ENCODE measurements at regions of chr10 and their contacts with region 1.

Region 1: GRCh38 chr10:34789966-34790506 is 25.1 kb downstream of the PARD3 start:
- DNase-seq: peak; percentile 96
- H3K4me3 ChIP-seq: no peak overlapping the region
- H3K27ac ChIP-seq: no peak overlapping the region
- H3K4me1 ChIP-seq: peaks cover 50% of the 10 kb centered on the region
- H3K27me3 ChIP-seq: peaks cover 32% of the 10 kb centered on the region
- CTCF ChIP-seq: no peak

Region 2: DNA sequence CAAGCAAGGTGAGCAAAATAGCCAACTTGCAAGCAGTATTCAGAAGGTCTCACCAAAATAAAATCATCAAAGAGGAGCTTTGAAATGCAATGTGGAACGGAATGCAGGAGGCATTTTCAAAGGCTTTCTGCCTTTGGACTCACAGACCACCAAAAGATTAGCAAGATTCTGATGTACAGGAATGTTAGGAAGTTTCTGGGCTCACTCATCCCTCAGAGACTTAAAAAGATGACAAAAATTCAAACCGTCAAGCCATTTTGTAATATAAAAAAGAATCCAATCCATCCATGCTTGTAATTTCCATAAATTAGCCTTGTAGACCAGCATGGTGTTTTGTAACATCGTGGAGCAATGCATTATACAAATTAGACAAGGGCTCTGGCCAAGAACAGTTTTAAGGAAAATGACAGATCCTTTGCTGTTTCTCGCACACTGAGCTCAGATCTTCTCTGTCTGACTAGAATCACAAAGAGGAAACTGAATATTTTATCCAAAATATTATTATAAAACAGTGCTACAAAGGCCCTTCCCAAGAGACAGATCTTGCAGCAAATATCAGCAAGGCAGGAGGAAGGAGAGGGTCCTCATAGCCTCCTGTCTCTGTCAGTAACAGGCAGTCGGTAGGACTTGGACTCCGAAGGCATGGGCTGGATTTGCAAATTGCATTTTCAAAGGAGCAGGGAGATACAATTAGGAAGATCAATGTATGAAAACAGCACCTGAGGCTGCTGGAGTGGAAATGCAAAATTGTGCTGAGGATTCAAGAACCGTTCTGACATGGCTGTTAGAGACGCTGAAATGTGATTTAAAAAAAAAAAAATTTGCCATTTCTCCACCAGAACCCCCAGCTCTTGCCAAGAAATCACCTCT is 1398.2 kb before region 1 on chr10:
- CTCF ChIA-PET with region 1: no interaction called
- POLR2A ChIA-PET with region 1: no interaction called
- intact Hi-C with region 1: no loop called
- DNase-seq: no peak
- H3K4me3 ChIP-seq: no peak overlapping the region
- H3K27ac ChIP-seq: no peak overlapping the region
- H3K4me1 ChIP-seq: no peaks in the 10 kb centered on the region
- H3K27me3 ChIP-seq: no peaks in the 10 kb centered on the region
- CTCF ChIP-seq: no peak

Region 3: DNA sequence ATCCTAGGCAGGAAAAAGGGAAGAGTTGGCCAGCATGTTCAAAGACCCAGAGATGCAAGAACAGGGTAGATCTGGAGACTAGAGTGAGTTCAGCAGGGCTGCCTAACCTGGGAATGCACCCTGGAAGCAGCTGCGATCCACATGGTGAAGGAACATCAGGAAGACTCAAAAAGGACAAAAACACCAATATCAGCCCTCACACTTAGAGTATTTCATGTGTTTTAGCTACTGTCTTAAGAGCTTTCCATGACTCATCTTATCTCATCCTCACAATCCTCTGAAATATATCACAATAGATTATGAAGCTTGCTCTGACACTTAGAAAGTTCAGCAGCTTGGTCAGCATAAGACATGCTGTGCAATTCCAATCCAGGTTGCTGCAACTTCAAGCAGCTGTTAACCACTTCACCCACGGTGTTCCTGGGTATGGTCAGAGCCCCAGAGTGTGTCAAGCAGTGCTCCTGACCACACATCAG is 355.9 kb before region 1 on chr10:
- CTCF ChIA-PET with region 1: no interaction called
- POLR2A ChIA-PET with region 1: no interaction called
- intact Hi-C with region 1: no loop called
- DNase-seq: no peak
- H3K4me3 ChIP-seq: no peak overlapping the region
- H3K27ac ChIP-seq: no peak overlapping the region
- H3K4me1 ChIP-seq: peaks cover 31% of the 10 kb centered on the region
- H3K27me3 ChIP-seq: no peaks in the 10 kb centered on the region
- CTCF ChIP-seq: no peak

Region 4: DNA sequence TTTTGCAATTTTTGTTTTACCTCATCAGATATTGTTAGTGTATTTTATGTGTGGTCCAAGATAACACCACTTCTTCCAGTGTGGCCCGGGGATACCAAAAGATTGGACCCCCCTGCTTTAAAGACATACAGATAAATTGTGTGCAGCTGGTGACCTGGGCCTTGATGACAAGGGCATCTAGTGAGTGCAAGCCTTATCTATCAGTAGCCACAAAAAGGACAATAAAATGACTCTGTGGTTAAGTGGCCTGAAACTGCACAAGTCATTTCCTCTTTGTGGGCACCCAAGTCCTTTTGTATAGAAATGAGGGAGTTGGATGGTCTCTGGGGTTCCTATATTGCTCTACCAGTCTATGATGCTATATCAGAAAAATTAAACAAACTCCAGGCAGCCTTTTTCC is 73.1 kb before region 1 on chr10:
- CTCF ChIA-PET with region 1: no interaction called
- POLR2A ChIA-PET with region 1: no interaction called
- intact Hi-C with region 1: no loop called
- DNase-seq: no peak
- H3K4me3 ChIP-seq: no peak overlapping the region
- H3K27ac ChIP-seq: no peak overlapping the region
- H3K4me1 ChIP-seq: peaks cover 10% of the 10 kb centered on the region
- H3K27me3 ChIP-seq: no peaks in the 10 kb centered on the region
- CTCF ChIP-seq: no peak

Region 5: GRCh38 chr10:34732926-34733325 is 57.1 kb before region 1 on chr10:
- CTCF ChIA-PET with region 1: no interaction called
- POLR2A ChIA-PET with region 1: no interaction called
- intact Hi-C with region 1: loop called (anchors 5 kb)
- DNase-seq: peak; percentile 63
- H3K4me3 ChIP-seq: no peak overlapping the region
- H3K27ac ChIP-seq: no peak overlapping the region
- H3K4me1 ChIP-seq: peaks cover 37% of the 10 kb centered on the region
- H3K27me3 ChIP-seq: no peaks in the 10 kb centered on the region
- CTCF ChIP-seq: peak; percentile 58